B cell (primary cell): ENCODE measurements at regions of chr10 and their contacts with region 1.

Region 1: DNA sequence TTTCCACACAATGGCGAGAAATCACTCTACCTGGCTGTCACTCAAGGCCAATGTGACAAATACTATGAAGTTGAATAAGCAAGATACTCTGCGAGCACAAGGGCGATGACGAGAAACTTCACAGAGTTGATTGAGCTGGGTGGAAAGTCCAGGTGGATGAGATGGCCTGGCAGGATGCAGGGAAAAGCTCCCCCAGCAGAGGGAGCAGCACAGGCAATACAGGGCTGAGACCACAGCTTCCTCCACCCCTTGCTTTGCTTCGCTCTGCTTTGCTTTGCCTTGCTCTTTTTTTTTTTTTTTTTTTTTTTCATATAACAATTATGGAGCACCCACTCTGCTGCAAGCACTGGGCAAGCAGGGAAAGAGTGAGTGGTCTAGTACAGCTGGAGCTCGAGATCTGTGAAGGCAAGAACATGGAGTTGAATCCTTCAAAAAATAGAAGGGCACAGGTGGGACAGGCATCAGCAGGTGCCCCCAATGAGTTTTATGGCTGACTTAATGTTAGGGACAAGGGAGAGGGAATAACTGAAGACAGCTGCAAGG is 88.3 kb downstream of the CABCOCO1 start:
- DNase-seq: peak; percentile 79
- ATAC-seq: peak; percentile 97
- H3K4me3 ChIP-seq: no peak overlapping the region
- H3K4me3 Mint-ChIP-seq: peak overlapping the region; percentile 52
- H3K27ac ChIP-seq: no peak overlapping the region
- H3K27ac Mint-ChIP-seq: peak overlapping the region; percentile 24
- H3K4me1 ChIP-seq: peaks cover 17 to 19% of the 10 kb centered on the region in 2 donors
- H3K4me1 Mint-ChIP-seq: peaks cover 27% of the 10 kb centered on the region
- H3K27me3 ChIP-seq: no peaks in the 10 kb centered on the region
- H3K27me3 Mint-ChIP-seq: no peaks in the 10 kb centered on the region
- CTCF ChIP-seq: peak; percentile 76

Region 2: DNA sequence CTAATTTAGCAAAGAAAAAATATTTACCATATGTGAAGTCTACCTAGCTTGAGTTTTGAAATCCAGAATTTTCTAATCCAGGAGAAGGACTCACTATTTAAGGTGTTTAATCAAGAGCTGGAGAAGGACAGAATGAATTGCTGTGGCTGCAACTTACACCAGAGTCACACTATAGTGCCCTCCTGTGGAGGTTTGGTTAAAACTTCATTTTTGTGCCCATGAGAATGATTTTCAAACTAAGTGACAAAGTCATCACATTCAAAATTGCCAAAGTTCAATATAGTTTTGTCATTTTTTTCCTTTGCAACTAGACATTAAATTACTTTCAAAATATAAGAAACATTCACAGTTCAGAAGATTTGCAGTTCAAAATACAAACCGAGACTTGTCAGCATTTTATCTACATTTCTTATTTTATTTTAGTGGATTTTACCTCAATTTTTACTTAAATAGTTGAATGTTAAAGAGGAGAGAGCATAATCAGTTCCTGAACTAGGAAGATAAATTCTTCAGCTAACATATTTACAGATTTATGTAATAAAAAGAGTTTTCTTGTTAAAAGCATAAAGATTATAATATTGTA is 17.6 kb before region 1 on chr10:
- CTCF ChIA-PET with region 1: interaction called, 10 read pairs
- POLR2A ChIA-PET with region 1: no interaction called
- intact Hi-C with region 1: no loop called
- DNase-seq: peak; percentile 41
- ATAC-seq: no peak
- H3K4me3 ChIP-seq: no peak overlapping the region
- H3K4me3 Mint-ChIP-seq: no peak overlapping the region
- H3K27ac ChIP-seq: no peak overlapping the region
- H3K27ac Mint-ChIP-seq: no peak overlapping the region
- H3K4me1 ChIP-seq: no peaks in the 10 kb centered on the region
- H3K4me1 Mint-ChIP-seq: no peaks in the 10 kb centered on the region
- H3K27me3 ChIP-seq: no peaks in the 10 kb centered on the region
- H3K27me3 Mint-ChIP-seq: peaks cover 67% of the 10 kb centered on the region
- CTCF ChIP-seq: peak; percentile 74

Region 3: DNA sequence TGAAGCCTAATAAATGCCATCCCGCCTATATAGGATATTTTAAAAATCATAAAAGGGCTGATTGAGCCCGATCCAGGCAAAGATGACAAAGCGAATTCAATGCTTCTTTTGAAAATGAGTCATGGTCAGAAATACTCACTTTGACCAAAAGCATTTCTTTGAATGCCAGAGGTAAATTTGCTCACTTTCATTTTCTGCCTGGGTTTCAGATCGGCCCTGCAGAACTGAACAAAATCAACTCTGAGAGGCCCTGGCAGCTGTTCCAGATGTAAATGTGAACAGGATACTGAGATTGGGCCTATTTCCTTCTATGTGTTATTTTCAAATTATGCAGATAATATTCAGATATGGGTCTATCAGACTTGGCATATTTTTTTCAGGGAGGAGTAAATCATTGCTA is 35.7 kb after region 1 on chr10:
- CTCF ChIA-PET with region 1: no interaction called
- POLR2A ChIA-PET with region 1: no interaction called
- intact Hi-C with region 1: no loop called
- DNase-seq: no peak
- ATAC-seq: no peak
- H3K4me3 ChIP-seq: no peak overlapping the region
- H3K4me3 Mint-ChIP-seq: no peak overlapping the region
- H3K27ac ChIP-seq: no peak overlapping the region
- H3K27ac Mint-ChIP-seq: no peak overlapping the region
- H3K4me1 ChIP-seq: no peaks in the 10 kb centered on the region
- H3K4me1 Mint-ChIP-seq: no peaks in the 10 kb centered on the region
- H3K27me3 ChIP-seq: no peaks in the 10 kb centered on the region
- H3K27me3 Mint-ChIP-seq: no peaks in the 10 kb centered on the region
- CTCF ChIP-seq: no peak

Region 4: GRCh38 chr10:61835069-61835945 is 84.3 kb after region 1 on chr10:
- CTCF ChIA-PET with region 1: interaction called, 15 read pairs
- POLR2A ChIA-PET with region 1: no interaction called
- intact Hi-C with region 1: loop called (anchors 1 kb)
- DNase-seq: peak; percentile 20
- ATAC-seq: no peak
- H3K4me3 ChIP-seq: no peak overlapping the region
- H3K4me3 Mint-ChIP-seq: no peak overlapping the region
- H3K27ac ChIP-seq: no peak overlapping the region
- H3K27ac Mint-ChIP-seq: no peak overlapping the region
- H3K4me1 ChIP-seq: peaks cover 0 to 2% of the 10 kb centered on the region in 2 donors
- H3K4me1 Mint-ChIP-seq: no peaks in the 10 kb centered on the region
- H3K27me3 ChIP-seq: no peaks in the 10 kb centered on the region
- H3K27me3 Mint-ChIP-seq: no peaks in the 10 kb centered on the region
- CTCF ChIP-seq: peak; percentile 41

Region 5: GRCh38 chr10:61869774-61870525 is 119.0 kb after region 1 on chr10:
- CTCF ChIA-PET with region 1: interaction called, 23 read pairs
- POLR2A ChIA-PET with region 1: no interaction called
- intact Hi-C with region 1: loop called (anchors 5 kb)
- DNase-seq: no peak
- ATAC-seq: no peak
- H3K4me3 ChIP-seq: no peak overlapping the region
- H3K4me3 Mint-ChIP-seq: no peak overlapping the region
- H3K27ac ChIP-seq: no peak overlapping the region
- H3K27ac Mint-ChIP-seq: no peak overlapping the region
- H3K4me1 ChIP-seq: peaks cover 3 to 4% of the 10 kb centered on the region in 2 donors
- H3K4me1 Mint-ChIP-seq: peaks cover 8% of the 10 kb centered on the region
- H3K27me3 ChIP-seq: no peaks in the 10 kb centered on the region
- H3K27me3 Mint-ChIP-seq: no peaks in the 10 kb centered on the region
- CTCF ChIP-seq: no peak

Region 6: GRCh38 chr10:61896854-61897661 is 146.1 kb after region 1 on chr10:
- CTCF ChIA-PET with region 1: interaction called, 18 read pairs
- POLR2A ChIA-PET with region 1: no interaction called
- intact Hi-C with region 1: loop called (anchors 2 kb)
- DNase-seq: peak; percentile 91
- ATAC-seq: peak; percentile 64
- H3K4me3 ChIP-seq: peak overlapping the region in 4 of 5 experiments; percentile 27 to 60 (median 48)
- H3K4me3 Mint-ChIP-seq: peak overlapping the region; percentile 98
- H3K27ac ChIP-seq: peak overlapping the region; percentile 38 to 47
- H3K27ac Mint-ChIP-seq: peak overlapping the region; percentile 94
- H3K4me1 ChIP-seq: peaks cover 29 to 33% of the 10 kb centered on the region in 2 donors
- H3K4me1 Mint-ChIP-seq: peaks cover 35% of the 10 kb centered on the region
- H3K27me3 ChIP-seq: no peaks in the 10 kb centered on the region
- H3K27me3 Mint-ChIP-seq: no peaks in the 10 kb centered on the region
- CTCF ChIP-seq: peak; percentile 77

Region 7: DNA sequence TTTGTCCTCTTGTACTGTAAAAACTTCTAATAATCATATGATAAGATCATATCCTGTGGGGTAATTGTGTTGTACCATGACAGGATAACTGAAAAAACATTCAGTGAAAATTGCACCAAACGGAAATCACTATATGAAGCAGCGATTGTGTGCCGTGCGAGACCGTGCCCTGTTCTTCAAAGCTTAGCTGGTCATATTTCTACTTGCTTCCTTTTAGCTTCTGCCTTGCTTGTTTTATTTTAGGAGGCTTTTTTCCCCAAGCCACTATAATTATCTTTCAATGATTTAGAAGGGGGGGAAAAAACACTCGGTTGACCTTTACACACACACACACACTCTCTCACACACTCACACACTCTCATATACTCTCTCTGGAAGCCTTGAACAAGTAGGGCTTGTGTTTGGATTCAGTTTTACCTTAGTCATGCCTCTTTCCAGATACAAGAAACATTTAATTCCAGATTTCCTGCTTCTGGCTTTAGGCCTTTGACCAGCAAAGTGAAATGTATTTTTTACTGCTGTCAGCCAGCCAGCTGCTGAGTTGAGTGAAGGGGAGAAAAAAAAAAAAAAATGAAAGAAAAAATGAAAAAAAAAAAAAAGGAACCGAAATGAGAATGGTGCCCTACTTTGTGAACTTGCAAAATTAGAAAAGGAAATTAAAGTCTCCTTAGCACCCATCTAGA is 331.9 kb after region 1 on chr10:
- CTCF ChIA-PET with region 1: interaction called, 3 read pairs
- POLR2A ChIA-PET with region 1: no interaction called
- intact Hi-C with region 1: loop called (anchors 10 kb)
- DNase-seq: no peak
- ATAC-seq: peak; percentile 29
- H3K4me3 ChIP-seq: peak overlapping the region; percentile 10 to 38 (median 36)
- H3K4me3 Mint-ChIP-seq: peak overlapping the region; percentile 79
- H3K27ac ChIP-seq: peak overlapping the region; percentile 90 to 91
- H3K27ac Mint-ChIP-seq: peak overlapping the region; percentile 86
- H3K4me1 ChIP-seq: peaks cover 76 to 78% of the 10 kb centered on the region in 2 donors
- H3K4me1 Mint-ChIP-seq: peaks cover 79% of the 10 kb centered on the region
- H3K27me3 ChIP-seq: no peaks in the 10 kb centered on the region
- H3K27me3 Mint-ChIP-seq: no peaks in the 10 kb centered on the region
- CTCF ChIP-seq: no peak